Left colon (tissue), 2 donors: ENCODE measurements at regions of chr19 and their contacts with region 1.

Region 1: DNA sequence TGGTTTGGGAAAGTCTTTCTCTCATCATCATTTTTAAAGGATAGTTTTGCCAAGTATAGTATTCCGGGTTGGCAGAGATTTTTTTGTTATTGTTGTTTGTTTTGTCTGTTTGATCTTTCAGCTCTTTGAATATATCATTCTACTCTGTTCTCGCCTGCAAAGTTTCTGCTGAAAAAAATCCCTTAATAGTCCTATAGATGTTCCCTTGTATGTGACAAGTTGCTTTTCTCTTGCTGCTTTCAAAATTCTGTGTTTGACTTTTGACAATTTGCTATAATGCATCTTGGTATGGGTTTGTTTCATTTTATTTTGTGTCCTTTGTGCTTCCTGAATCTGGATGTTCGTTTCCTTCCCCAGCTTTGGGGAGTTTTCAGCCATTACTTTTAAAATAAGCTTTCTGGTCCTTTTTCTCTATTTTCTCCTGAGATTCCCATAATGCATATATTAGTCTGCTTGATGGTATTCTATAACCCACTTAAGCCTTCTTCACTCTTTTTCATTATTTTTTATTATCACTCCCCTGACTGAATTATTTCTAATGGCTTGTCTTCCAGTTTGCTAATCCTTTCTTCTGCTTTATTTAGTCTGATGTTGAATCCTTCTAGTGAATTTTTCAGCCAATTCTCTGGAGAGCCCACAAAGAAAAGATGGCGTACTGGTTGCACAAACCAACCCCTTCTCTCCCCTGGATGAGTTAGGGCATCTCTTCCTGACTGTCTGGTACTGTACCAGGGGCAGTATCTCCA is 14.6 kb downstream of the ZNF569 start:
- DNase-seq: no peak
- ATAC-seq: no peak

Region 2: GRCh38 chr19:37389234-37389633 is 63.4 kb before region 1 on chr19:
- intact Hi-C with region 1: no loop called
- DNase-seq: no peak
- ATAC-seq: no peak

Region 3: GRCh38 chr19:37403403-37403802 is 49.3 kb before region 1 on chr19:
- intact Hi-C with region 1: loop called in 1 of 2 experiments (anchors 10 kb)
- DNase-seq: no peak
- ATAC-seq: no peak